Activated CD8-positive, alpha-beta T cell treated with anti-CD3 and anti-CD28 coated beads for 36 hours (primary cell): ENCODE measurements at regions of chr11 and their contacts with region 1.

Region 1: DNA sequence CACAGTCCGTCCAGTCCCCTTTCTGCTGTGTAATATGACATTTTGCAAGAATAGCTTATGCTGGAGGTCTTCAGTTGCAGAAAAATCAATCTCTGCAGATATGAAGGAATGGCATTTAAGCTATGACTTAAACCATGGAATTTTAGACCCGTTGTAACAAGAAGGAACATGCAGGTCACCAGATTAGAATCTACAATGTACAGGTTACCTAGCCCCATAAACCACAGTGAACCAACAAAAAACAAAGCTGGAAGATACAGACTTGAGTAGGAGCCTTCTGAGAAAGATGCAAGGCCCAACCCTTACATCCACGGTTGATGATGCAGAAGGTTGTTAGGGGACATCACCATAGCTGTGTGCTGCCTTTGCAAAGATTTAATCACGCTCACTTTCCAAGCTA is 132.5 kb downstream of the WT1 start:
- DNase-seq: no peak
- ATAC-seq: no peak
- H3K4me3 Mint-ChIP-seq: no peak overlapping the region
- H3K27ac Mint-ChIP-seq: no peak overlapping the region
- H3K4me1 Mint-ChIP-seq: no peaks in the 10 kb centered on the region
- H3K27me3 Mint-ChIP-seq: no peaks in the 10 kb centered on the region
- CTCF ChIP-seq: no peak

Region 2: DNA sequence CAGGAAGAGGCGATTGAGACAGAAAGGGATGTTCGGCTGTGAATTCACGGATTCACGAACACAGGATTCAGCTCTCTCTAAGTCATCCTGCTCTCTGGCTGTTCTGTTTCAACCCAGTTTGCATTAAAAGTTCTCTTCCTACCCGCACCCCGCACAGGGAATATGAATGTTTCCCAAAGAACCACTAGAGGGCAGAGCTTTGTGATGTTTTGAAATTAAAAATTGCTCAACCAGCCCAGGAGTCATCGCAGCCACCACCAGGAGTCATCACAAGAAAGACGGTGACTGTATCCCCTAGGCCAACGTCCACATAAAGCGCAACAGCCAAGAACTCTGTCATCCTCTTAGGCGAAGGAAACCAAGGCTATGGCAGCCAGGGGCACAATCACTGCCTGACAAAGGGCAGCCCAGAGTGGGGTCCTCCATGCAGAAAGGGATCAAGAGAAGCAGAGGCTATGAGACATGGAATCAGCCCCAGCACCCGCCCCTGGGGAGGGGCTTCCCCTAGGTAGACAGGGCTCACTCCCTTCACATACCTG is 10.1 kb after region 1 on chr11:
- CTCF ChIA-PET with region 1: interaction called, 12 read pairs
- POLR2A ChIA-PET with region 1: interaction called, 3 read pairs
- intact Hi-C with region 1: no loop called
- DNase-seq: peak; percentile 57
- ATAC-seq: peak; percentile 85
- H3K4me3 Mint-ChIP-seq: no peak overlapping the region
- H3K27ac Mint-ChIP-seq: no peak overlapping the region
- H3K4me1 Mint-ChIP-seq: peaks cover 7% of the 10 kb centered on the region
- H3K27me3 Mint-ChIP-seq: peaks cover 8% of the 10 kb centered on the region
- CTCF ChIP-seq: peak; percentile 39